GM13977 (cell line): ENCODE measurements at regions of chr7 and their contacts with region 1.

Region 1: GRCh38 chr7:121138262-121138933 is 149.9 kb downstream of the CPED1 start:
- DNase-seq: peak; percentile 4
- CTCF ChIP-seq: no peak

Region 2: GRCh38 chr7:120583899-120584586 is 554.4 kb before region 1 on chr7:
- in situ Hi-C with region 1: no loop called
- DNase-seq: no peak
- CTCF ChIP-seq: no peak

Region 3: GRCh38 chr7:120774481-120774880 is 363.9 kb before region 1 on chr7:
- in situ Hi-C with region 1: no loop called
- DNase-seq: no peak
- CTCF ChIP-seq: no peak

Region 4: GRCh38 chr7:121329191-121330052 is 191.0 kb after region 1 on chr7:
- in situ Hi-C with region 1: loop called (anchors 25 kb)
- DNase-seq: peak; percentile 69
- CTCF ChIP-seq: peak; percentile 36

Region 5: DNA sequence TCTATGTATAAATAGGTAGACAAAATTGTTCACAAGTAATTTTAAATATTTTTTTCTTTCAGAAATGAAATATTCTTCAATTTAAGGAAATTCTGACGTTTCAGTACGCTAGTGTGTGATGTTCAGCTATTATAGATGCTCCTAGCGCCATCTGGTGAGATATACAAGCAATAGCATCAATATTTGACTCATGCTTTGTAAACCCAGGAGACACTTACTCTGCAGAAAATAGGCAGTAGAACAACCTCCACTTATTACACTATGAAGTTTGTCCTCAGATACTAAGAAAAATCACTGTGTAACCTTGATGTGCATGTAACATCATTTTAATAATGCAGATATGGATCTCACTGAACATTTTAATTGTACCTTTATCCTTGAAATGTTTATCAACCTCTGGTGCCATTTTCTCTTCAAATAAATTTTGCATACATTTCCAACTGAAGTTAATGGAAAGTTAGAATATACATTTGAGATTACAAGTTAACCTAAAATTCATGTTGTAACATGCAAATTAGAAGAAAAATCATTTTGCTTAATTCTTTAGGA is 409.2 kb after region 1 on chr7:
- in situ Hi-C with region 1: loop called (anchors 25 kb)
- DNase-seq: peak; percentile 42
- CTCF ChIP-seq: peak; percentile 67